ENCODE measurements at regions of chr18 and their contacts with region 1.

Region 1: GRCh38 chr18:60554967-60555366 is 182.4 kb upstream of the MC4R start:
- DNase-seq: no peak
- H3K4me3 ChIP-seq: no peak overlapping the region
- H3K27ac ChIP-seq: no peak overlapping the region
- H3K4me1 ChIP-seq: no peaks in the 10 kb centered on the region
- H3K27me3 ChIP-seq: no peaks in the 10 kb centered on the region
- CTCF ChIP-seq: no peak
- EP300 ChIP-seq: no peak
- POLR2A ChIP-seq: no peak

Region 2: DNA sequence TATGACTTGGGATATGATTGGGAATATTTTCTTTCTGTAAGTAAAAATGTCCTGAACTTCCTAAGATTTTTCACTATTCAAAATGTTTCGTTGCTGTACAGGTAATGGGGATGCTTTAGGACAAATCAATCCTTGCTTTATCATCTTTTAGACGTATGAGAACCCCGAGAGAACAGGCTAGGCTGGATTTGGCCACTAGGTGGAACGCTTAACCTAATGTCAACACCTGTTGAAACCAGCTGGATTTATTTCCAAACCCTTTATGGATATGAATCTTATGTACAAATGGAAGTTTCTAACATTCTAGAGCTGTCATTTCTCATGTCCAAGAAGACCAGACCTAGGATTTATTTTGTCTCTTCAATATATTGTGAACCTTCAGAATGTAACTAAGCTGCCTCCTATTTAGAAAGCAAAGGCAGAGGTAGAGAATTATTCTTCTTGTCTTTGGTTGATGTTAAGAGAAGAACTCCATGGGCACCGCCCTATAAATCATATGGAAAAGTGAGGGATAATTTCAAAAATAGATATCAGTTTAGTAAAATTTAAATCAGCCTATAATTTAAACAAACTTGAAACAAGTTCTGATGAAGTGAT is 558.5 kb before region 1 on chr18:
- intact Hi-C with region 1: loop called in 1 of 4 experiments (anchors 5 kb)
- DNase-seq: no peak
- H3K4me3 ChIP-seq: no peak overlapping the region
- H3K27ac ChIP-seq: no peak overlapping the region
- H3K4me1 ChIP-seq: no peaks in the 10 kb centered on the region
- H3K27me3 ChIP-seq: no peaks in the 10 kb centered on the region
- CTCF ChIP-seq: no peak
- EP300 ChIP-seq: no peak
- POLR2A ChIP-seq: no peak